ENCODE measurements at regions of chr3 and their contacts with region 1.

Region 1: DNA sequence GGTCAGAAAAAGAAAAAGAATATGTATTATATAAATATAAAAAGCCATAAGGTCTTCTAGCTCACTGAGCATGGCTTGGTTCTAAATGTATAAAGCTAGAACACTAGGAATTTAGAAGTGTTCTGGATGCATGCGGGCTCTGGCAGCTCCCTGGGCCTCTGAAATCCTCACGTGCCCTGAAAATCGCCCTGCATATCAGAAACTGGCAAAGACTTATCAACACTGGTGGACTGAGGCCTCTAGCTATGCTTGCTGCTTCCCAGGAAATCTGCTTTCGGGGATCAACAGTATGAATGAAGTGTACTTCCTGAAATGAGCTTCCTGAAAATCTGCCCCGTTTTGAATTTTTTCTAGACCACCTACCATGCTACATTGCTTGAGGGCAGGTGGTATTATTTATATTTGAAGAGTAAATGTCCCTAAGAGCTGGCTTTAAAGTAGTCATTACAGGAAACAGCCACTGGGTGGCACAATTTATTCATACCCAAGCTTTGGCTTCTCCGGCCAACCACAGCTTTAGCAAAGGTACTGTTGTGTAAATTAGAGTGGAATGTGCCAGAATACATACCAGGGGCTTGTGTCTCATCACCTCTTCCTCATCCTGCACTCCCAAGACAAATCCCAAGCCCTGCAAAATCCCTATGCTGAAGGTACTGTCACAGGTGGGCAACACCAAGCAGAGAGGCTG is 17.7 kb downstream of the CRTAP start:
- DNase-seq: no peak
- ATAC-seq: peak; percentile 94
- H3K4me3 ChIP-seq: no peak overlapping the region
- H3K27ac ChIP-seq: no peak overlapping the region
- H3K4me1 ChIP-seq: no peaks in the 10 kb centered on the region
- H3K27me3 ChIP-seq: no peaks in the 10 kb centered on the region
- CTCF ChIP-seq: peak; percentile 73

Region 2: GRCh38 chr3:32778389-32778788 is 353.1 kb before region 1 on chr3:
- intact Hi-C with region 1: no loop called
- DNase-seq: no peak
- ATAC-seq: no peak
- H3K4me3 ChIP-seq: no peak overlapping the region
- H3K27ac ChIP-seq: no peak overlapping the region
- H3K4me1 ChIP-seq: no peaks in the 10 kb centered on the region
- H3K27me3 ChIP-seq: no peaks in the 10 kb centered on the region
- CTCF ChIP-seq: no peak

Region 3: GRCh38 chr3:32856355-32856889 is 275.1 kb before region 1 on chr3:
- intact Hi-C with region 1: no loop called
- DNase-seq: peak; percentile 69
- ATAC-seq: peak; percentile 85
- H3K4me3 ChIP-seq: no peak overlapping the region
- H3K27ac ChIP-seq: no peak overlapping the region
- H3K4me1 ChIP-seq: no peaks in the 10 kb centered on the region
- H3K27me3 ChIP-seq: no peaks in the 10 kb centered on the region
- CTCF ChIP-seq: no peak

Region 4: DNA sequence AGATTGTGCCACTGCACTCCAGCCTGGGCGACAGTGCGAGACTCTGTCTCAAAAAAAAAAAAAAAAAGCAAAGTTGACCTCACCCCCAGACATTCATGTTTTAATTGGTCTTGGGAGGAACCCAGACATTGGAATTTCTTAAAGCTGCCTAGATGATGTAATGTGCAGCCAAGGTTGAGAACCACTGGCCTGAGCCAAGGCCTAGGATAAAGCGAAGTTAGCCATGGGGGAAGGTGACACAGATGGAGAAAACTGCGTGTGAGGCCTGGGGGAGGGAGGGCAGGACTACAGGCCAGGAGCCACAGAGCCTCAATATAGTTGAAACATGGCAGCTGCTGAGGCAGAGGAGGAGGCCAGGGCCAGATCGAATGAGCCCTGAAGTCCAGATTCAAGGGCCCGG is 55.5 kb before region 1 on chr3:
- intact Hi-C with region 1: no loop called
- DNase-seq: no peak
- ATAC-seq: peak; percentile 38
- H3K4me3 ChIP-seq: no peak overlapping the region
- H3K27ac ChIP-seq: no peak overlapping the region
- H3K4me1 ChIP-seq: no peaks in the 10 kb centered on the region
- H3K27me3 ChIP-seq: no peaks in the 10 kb centered on the region
- CTCF ChIP-seq: no peak

Region 5: GRCh38 chr3:33250712-33251111 is 119.2 kb after region 1 on chr3:
- intact Hi-C with region 1: no loop called
- DNase-seq: no peak
- ATAC-seq: no peak
- H3K4me3 ChIP-seq: no peak overlapping the region
- H3K27ac ChIP-seq: no peak overlapping the region
- H3K4me1 ChIP-seq: no peaks in the 10 kb centered on the region
- H3K27me3 ChIP-seq: no peaks in the 10 kb centered on the region
- CTCF ChIP-seq: no peak

Region 6: GRCh38 chr3:33372218-33373081 is 241.0 kb after region 1 on chr3:
- intact Hi-C with region 1: loop called (anchors 5 kb)
- DNase-seq: no peak
- ATAC-seq: peak; percentile 87
- H3K4me3 ChIP-seq: no peak overlapping the region
- H3K27ac ChIP-seq: no peak overlapping the region
- H3K4me1 ChIP-seq: peaks cover 9% of the 10 kb centered on the region
- H3K27me3 ChIP-seq: no peaks in the 10 kb centered on the region
- CTCF ChIP-seq: peak; percentile 93

Measured in upper lobe of right lung (tissue), 1 donor.